GM10248 (cell line): ENCODE measurements at regions of chr14 and their contacts with region 1.

Region 1: DNA sequence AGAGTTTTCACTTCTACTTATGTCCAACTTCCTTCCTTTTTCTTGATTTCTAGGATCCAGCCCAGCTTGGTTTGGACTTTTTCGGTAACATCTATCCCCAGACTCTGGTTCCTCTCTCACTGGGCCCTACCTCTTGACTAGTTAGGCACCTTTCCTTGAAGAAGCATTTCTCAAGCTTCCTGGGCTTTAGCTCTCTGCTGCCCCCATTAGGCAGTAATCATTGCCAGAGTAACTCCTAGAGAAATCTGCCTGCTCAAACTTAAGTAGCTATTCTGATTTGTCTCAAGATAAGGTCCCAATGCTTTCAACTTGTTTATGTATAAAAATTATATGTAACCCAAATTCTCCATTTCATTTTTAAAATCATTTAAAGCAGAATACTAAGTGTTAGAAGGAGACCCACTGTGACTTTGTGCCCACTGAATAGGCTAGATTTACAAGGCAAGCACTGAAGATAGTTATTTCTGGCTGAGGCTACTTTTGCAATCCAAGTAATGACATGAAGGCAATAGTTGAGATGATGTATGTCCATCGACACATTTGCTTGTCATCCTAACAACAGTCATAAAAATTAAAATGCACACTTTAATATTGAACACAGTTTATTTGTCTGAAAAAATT is 275.0 kb upstream of the G2E3 start:
- DNase-seq: peak; percentile 16
- CTCF ChIP-seq: peak; percentile 42

Region 2: GRCh38 chr14:30296931-30297405 is 13.0 kb after region 1 on chr14:
- CTCF ChIA-PET with region 1: interaction called, 11 read pairs
- POLR2A ChIA-PET with region 1: no interaction called
- DNase-seq: no peak
- CTCF ChIP-seq: no peak